ENCODE measurements at regions of chr18 and their contacts with region 1.

Region 1: DNA sequence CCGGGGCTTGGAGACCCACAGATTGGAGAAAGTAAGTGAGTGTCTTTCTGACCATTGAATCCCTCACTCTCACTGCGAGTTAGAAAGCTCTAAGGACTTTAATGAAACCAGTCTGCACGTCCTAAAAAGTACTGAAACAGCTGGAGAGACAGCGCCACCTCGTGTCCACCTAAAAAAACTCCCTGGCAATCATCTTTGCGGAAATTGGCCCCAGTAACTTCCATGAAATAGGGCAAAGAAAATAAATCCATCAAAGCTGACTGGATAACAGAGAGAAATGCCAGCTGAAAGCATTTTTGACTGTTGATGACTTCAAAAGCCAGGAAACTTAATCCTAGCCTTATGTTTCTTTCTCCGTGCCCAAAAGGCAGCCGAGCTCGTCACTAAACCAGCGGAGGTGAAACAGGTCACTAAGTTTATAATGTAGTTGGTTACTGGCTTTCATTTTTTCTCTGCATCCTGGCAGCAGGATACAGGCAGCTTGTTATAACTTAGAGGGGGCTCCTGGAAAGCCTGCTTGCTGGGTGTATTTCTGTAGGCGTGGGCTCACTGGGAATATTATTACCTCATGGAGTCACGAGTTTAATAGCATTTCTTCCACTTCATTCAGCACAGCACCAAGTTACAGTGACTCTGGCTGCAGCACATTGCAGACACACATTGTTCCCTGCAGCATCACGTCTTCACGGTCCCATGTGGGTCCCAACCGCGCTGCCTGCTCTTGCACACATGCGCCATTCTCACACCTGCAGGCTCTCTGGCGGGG is 266.5 kb downstream of the HRH4 start:
- DNase-seq: no peak
- H3K4me3 ChIP-seq: peak overlapping the region; percentile 26 to 60
- H3K27ac ChIP-seq: peak overlapping the region in 1 of 2 donors; percentile 52
- H3K4me1 ChIP-seq: no peaks in the 10 kb centered on the region
- H3K27me3 ChIP-seq: no peaks in the 10 kb centered on the region
- CTCF ChIP-seq: peak; percentile 41 to 88 (median 73)

Region 2: GRCh38 chr18:24570716-24571115 is 156.2 kb before region 1 on chr18:
- intact Hi-C with region 1: no loop called
- DNase-seq: no peak
- H3K4me3 ChIP-seq: no peak overlapping the region
- H3K27ac ChIP-seq: no peak overlapping the region
- H3K4me1 ChIP-seq: no peaks in the 10 kb centered on the region
- H3K27me3 ChIP-seq: no peaks in the 10 kb centered on the region
- CTCF ChIP-seq: no peak

Region 3: GRCh38 chr18:24600076-24600654 is 126.7 kb before region 1 on chr18:
- intact Hi-C with region 1: loop called (anchors 2 kb)
- DNase-seq: no peak
- H3K4me3 ChIP-seq: no peak overlapping the region
- H3K27ac ChIP-seq: no peak overlapping the region
- H3K4me1 ChIP-seq: no peaks in the 10 kb centered on the region
- H3K27me3 ChIP-seq: no peaks in the 10 kb centered on the region
- CTCF ChIP-seq: peak; percentile 12 to 53 (median 38)